Caco-2 (cell line): ENCODE measurements at regions of chr2 and their contacts with region 1.

Region 1: DNA sequence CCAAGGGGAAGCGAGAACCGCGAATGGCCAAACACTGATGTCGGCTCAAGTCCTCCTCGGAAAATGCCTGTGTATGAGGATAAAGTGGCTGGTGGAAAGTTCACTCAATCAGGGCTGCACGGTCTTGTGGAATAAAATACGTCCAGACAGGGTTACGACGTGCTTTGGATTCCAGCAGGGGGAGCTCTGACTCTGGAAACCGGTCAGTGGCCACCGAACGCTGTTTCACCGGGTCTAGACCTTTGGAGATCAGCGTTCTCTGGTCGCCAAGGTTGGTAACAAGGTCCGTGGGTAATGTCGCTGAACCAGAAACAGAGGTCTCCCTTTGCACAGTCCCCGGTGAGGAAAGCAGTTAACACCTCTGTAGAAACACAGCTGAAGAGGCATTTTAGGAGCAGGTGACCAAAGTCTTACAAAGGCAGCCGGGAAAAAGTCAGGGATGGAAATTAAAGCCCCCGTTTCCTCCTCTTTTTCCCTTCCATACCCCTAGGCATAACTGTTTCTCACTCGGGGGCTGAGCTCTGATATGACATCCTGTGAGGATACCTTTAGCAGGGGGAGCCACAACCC is 47.8 kb downstream of the CDCA7 start:
- DNase-seq: peak; percentile 86 to 89
- H3K4me3 ChIP-seq: no peak overlapping the region
- H3K4me3 Mint-ChIP-seq: peak overlapping the region; percentile 45
- H3K27ac Mint-ChIP-seq: no peak overlapping the region
- H3K4me1 ChIP-seq: no peaks in the 10 kb centered on the region
- H3K4me1 Mint-ChIP-seq: peaks cover 13% of the 10 kb centered on the region
- H3K27me3 ChIP-seq: no peaks in the 10 kb centered on the region
- H3K27me3 Mint-ChIP-seq: peaks cover 12% of the 10 kb centered on the region
- CTCF ChIP-seq: peak; percentile 86 to 91

Region 2: GRCh38 chr2:172806493-172806892 is 596.0 kb before region 1 on chr2:
- CTCF ChIA-PET with region 1: no interaction called
- POLR2A ChIA-PET with region 1: no interaction called
- intact Hi-C with region 1: loop called (anchors 10 kb)
- DNase-seq: peak in 1 of 2 experiments; percentile 40
- H3K4me3 ChIP-seq: no peak overlapping the region
- H3K4me3 Mint-ChIP-seq: no peak overlapping the region
- H3K27ac Mint-ChIP-seq: no peak overlapping the region
- H3K4me1 ChIP-seq: no peaks in the 10 kb centered on the region
- H3K4me1 Mint-ChIP-seq: no peaks in the 10 kb centered on the region
- H3K27me3 ChIP-seq: no peaks in the 10 kb centered on the region; the same call in 1 of the 2 replicates
- H3K27me3 Mint-ChIP-seq: peaks cover 3% of the 10 kb centered on the region
- CTCF ChIP-seq: peak; percentile 80 to 90

Region 3: DNA sequence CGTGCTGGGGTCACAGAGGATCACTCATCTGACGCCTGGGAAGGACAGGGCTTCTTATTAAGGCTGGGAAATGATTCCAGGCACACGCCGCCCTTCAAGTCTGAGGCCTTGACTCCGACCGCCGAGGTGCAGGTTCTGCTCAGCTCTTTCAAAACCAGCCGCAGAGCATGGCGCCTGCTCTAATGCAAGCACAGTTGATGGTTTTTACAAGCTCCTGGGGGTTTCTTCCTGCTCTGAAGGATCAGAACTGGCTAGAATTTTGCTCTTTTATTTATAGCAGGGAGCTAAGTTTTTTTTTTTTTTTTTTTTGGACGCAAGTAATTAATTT is 15.8 kb before region 1 on chr2:
- CTCF ChIA-PET with region 1: interaction called, 8 read pairs
- POLR2A ChIA-PET with region 1: interaction called, 11 read pairs
- intact Hi-C with region 1: no loop called
- DNase-seq: no peak
- H3K4me3 ChIP-seq: no peak overlapping the region
- H3K4me3 Mint-ChIP-seq: no peak overlapping the region
- H3K27ac Mint-ChIP-seq: no peak overlapping the region
- H3K4me1 ChIP-seq: no peaks in the 10 kb centered on the region
- H3K4me1 Mint-ChIP-seq: no peaks in the 10 kb centered on the region
- H3K27me3 ChIP-seq: no peaks in the 10 kb centered on the region
- H3K27me3 Mint-ChIP-seq: no peaks in the 10 kb centered on the region
- CTCF ChIP-seq: no peak

Region 4: GRCh38 chr2:173571021-173571882 is 168.8 kb after region 1 on chr2:
- CTCF ChIA-PET with region 1: interaction called, 7 read pairs
- POLR2A ChIA-PET with region 1: no interaction called
- intact Hi-C with region 1: loop called (anchors 1 kb)
- DNase-seq: peak in 1 of 2 experiments; percentile 50
- H3K4me3 ChIP-seq: no peak overlapping the region
- H3K4me3 Mint-ChIP-seq: peak overlapping the region; percentile 32
- H3K27ac Mint-ChIP-seq: no peak overlapping the region
- H3K4me1 ChIP-seq: peaks cover 15% of the 10 kb centered on the region; the same call in 1 of the 2 replicates
- H3K4me1 Mint-ChIP-seq: peaks cover 12% of the 10 kb centered on the region
- H3K27me3 ChIP-seq: no peaks in the 10 kb centered on the region
- H3K27me3 Mint-ChIP-seq: no peaks in the 10 kb centered on the region
- CTCF ChIP-seq: peak; percentile 37 to 40

Region 5: GRCh38 chr2:173749315-173749714 is 346.8 kb after region 1 on chr2:
- CTCF ChIA-PET with region 1: no interaction called
- POLR2A ChIA-PET with region 1: no interaction called
- intact Hi-C with region 1: loop called (anchors 1 kb)
- DNase-seq: peak in 1 of 2 experiments; percentile 38
- H3K4me3 ChIP-seq: no peak overlapping the region
- H3K4me3 Mint-ChIP-seq: no peak overlapping the region
- H3K27ac Mint-ChIP-seq: no peak overlapping the region
- H3K4me1 ChIP-seq: no peaks in the 10 kb centered on the region
- H3K4me1 Mint-ChIP-seq: peaks cover 5% of the 10 kb centered on the region
- H3K27me3 ChIP-seq: no peaks in the 10 kb centered on the region
- H3K27me3 Mint-ChIP-seq: peaks cover under 1% of the 10 kb centered on the region
- CTCF ChIP-seq: peak; percentile 52 to 62